Activated CD4-positive, alpha-beta T cell treated with anti-CD3 and anti-CD28 coated beads for 36 hours (primary cell): ENCODE measurements at regions of chr5 and their contacts with region 1.

Region 1: GRCh38 chr5:72307968-72308852 is 11.8 kb downstream of the MRPS27 start:
- DNase-seq: peak; percentile 97
- ATAC-seq: peak; percentile 99
- H3K4me3 Mint-ChIP-seq: peak overlapping the region; percentile 86
- H3K27ac Mint-ChIP-seq: peak overlapping the region; percentile 96
- H3K4me1 Mint-ChIP-seq: peaks cover 28% of the 10 kb centered on the region
- H3K27me3 Mint-ChIP-seq: no peaks in the 10 kb centered on the region

Region 2: DNA sequence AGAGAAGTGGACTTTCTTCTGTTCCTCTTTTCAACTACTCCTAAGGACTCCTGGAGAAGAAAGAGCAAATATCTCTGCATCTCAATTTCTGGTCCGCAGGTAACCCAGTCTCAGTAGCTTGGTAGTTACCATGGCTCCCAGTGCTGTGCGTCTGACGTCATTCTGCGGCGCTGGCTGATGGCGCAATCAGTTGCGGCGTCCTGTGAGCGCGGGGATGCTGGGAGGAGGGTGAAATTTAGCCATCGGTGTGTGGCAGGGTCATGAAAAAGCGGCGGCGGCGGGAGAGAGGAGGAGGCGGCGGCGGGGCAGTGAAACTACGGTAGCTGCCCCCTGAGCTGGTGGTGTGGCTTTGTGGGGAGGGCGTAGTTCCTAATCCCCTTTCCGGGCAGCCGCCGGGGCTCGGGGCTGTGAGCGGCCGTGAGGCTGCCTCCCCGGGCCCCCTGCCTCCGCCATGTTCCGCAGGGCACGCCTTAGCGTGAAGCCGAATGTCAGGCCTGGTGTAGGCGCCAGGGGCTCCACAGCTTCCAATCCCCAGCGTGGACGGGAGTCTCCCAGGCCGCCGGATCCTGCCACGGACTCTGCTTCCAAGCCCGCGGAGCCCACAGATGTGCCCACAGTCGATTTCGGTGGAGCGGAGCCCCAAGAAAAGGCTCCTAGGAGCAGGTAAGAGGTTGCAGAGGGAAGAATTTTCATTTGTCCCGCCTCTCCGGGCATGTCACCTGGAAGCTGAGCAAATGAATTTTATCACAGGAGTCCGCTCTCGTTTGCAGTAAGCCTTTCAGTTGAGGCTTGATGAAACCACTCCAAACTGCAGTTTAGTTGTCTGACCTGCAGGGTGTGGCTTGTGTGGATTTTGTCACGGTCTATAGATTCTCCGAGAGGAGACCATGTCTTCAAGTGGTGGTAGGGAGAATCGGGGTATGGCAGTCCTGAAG is 852.5 kb before region 1 on chr5 and contains the start of gene BDP1:
- CTCF ChIA-PET with region 1: no interaction called
- POLR2A ChIA-PET with region 1: no interaction called
- intact Hi-C with region 1: loop called (anchors 10 kb)
- DNase-seq: peak; percentile 99
- ATAC-seq: peak; percentile 93
- H3K4me3 Mint-ChIP-seq: peak within 1 kb of the TSS; percentile 93
- H3K27ac Mint-ChIP-seq: peak within 1 kb of the TSS; percentile 99
- H3K4me1 Mint-ChIP-seq: peaks cover 20% of the 10 kb centered on the region
- H3K27me3 Mint-ChIP-seq: peaks cover 6% of the 10 kb centered on the region
- total RNA-seq, gene BDP1: 27.2 to 30.1 TPM

Region 3: DNA sequence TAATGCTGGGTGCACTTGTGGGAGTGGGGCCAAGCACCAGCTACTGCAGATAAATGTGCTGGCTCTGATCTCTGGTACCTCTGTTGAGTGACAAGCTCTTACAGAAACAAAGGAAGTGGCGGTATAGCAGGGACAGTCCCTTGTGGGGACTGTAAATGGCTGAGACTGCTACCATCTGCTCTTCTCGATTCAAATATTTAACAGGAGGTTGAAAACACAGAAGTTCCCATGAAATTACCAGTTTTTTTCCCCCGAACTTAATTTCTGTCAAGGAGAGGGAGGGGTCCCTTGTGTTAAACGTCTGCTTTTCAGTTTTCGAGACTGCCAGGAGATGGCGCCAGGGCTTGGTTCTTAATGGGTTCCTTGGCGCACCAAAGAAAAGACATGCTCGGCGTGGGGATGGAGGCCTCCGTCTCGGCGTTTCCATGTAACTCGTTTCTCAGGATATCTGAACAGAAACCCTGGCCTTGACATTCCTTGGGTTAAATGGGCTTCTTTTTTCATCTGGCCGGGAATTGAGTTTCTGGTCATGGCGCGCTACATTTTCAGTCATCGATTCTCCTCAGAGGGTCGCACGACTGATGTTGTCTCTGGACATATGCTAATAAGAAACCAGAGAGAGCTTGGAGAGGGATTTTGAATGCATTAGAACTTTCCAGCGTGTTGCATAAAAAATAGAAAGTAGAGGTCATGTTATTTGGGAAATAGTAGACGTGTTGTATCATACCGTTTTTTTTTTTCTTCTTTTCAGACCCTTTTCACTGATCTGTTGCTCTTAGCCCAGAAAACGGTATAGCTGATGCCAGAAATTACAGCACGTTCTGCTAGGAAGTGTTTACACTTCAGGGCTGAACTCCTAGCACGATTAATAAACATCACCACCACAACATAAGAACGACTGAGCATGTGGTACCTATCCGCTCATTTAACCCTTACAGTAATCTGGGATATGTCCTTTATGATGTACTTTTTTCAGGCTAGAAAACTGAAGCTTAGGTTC is 525.1 kb before region 1 on chr5:
- CTCF ChIA-PET with region 1: interaction called, 4 read pairs
- POLR2A ChIA-PET with region 1: no interaction called
- intact Hi-C with region 1: loop called (anchors 2 to 10 kb)
- DNase-seq: peak; percentile 85
- ATAC-seq: peak; percentile 97
- H3K4me3 Mint-ChIP-seq: peak overlapping the region; percentile 29
- H3K27ac Mint-ChIP-seq: peak overlapping the region; percentile 62
- H3K4me1 Mint-ChIP-seq: peaks cover 26% of the 10 kb centered on the region
- H3K27me3 Mint-ChIP-seq: peaks cover 4% of the 10 kb centered on the region

Region 4: GRCh38 chr5:72209515-72210115 is 98.6 kb before region 1 on chr5:
- CTCF ChIA-PET with region 1: no interaction called
- POLR2A ChIA-PET with region 1: no interaction called
- intact Hi-C with region 1: no loop called
- DNase-seq: no peak
- ATAC-seq: no peak
- H3K4me3 Mint-ChIP-seq: no peak overlapping the region
- H3K27ac Mint-ChIP-seq: no peak overlapping the region
- H3K4me1 Mint-ChIP-seq: peaks cover 24% of the 10 kb centered on the region
- H3K27me3 Mint-ChIP-seq: no peaks in the 10 kb centered on the region

Region 5: GRCh38 chr5:72234265-72234700 is 73.9 kb before region 1 on chr5:
- CTCF ChIA-PET with region 1: interaction called, 3 read pairs
- POLR2A ChIA-PET with region 1: no interaction called
- intact Hi-C with region 1: loop called in 1 of 2 experiments (anchors 5 kb)
- DNase-seq: peak; percentile 32
- ATAC-seq: peak; percentile 94
- H3K4me3 Mint-ChIP-seq: no peak overlapping the region
- H3K27ac Mint-ChIP-seq: no peak overlapping the region
- H3K4me1 Mint-ChIP-seq: peaks cover 40% of the 10 kb centered on the region
- H3K27me3 Mint-ChIP-seq: no peaks in the 10 kb centered on the region

Region 6: GRCh38 chr5:72510610-72511181 is 202.5 kb after region 1 on chr5:
- CTCF ChIA-PET with region 1: no interaction called
- POLR2A ChIA-PET with region 1: no interaction called
- intact Hi-C with region 1: no loop called
- DNase-seq: peak; percentile 16
- ATAC-seq: peak; percentile 55
- H3K4me3 Mint-ChIP-seq: no peak overlapping the region
- H3K27ac Mint-ChIP-seq: no peak overlapping the region
- H3K4me1 Mint-ChIP-seq: peaks cover 8% of the 10 kb centered on the region
- H3K27me3 Mint-ChIP-seq: peaks cover 36% of the 10 kb centered on the region

Region 7: GRCh38 chr5:72816311-72817145 is 508.3 kb after region 1 on chr5 and contains the start of gene TNPO1:
- CTCF ChIA-PET with region 1: no interaction called
- POLR2A ChIA-PET with region 1: no interaction called
- intact Hi-C with region 1: loop called in 1 of 2 experiments (anchors 5 kb)
- DNase-seq: peak; percentile 89
- ATAC-seq: peak; percentile 79
- H3K4me3 Mint-ChIP-seq: peak within 1 kb of the TSS; percentile 88
- H3K27ac Mint-ChIP-seq: peak within 1 kb of the TSS; percentile 85
- H3K4me1 Mint-ChIP-seq: peaks cover 14% of the 10 kb centered on the region
- H3K27me3 Mint-ChIP-seq: peaks cover 14% of the 10 kb centered on the region
- total RNA-seq, gene TNPO1: 107 to 162 TPM

Region 8: DNA sequence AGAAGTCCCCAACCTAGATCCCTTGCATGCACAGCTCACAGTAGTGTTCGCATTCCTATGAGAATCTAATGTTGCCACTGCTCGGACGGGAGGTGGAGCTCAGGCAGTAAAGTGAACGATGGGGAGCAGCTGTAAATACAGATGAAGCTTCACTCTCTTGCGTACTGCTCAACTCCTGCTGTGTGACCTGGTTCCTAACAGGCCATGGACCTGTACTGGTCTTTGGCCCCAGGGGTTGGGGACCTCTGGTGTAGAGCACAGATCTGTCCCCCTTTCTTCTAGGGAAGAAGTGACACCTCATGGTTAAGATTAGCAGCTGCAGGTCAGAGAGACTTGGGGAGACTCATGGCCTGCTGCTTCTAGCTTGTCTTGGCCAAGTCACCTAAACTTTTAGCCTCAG is 1324.8 kb after region 1 on chr5:
- CTCF ChIA-PET with region 1: no interaction called
- POLR2A ChIA-PET with region 1: no interaction called
- intact Hi-C with region 1: no loop called
- DNase-seq: no peak
- ATAC-seq: no peak
- H3K4me3 Mint-ChIP-seq: no peak overlapping the region
- H3K27ac Mint-ChIP-seq: no peak overlapping the region
- H3K4me1 Mint-ChIP-seq: no peaks in the 10 kb centered on the region
- H3K27me3 Mint-ChIP-seq: peaks cover 19% of the 10 kb centered on the region